ENCODE measurements at regions of chr2 and their contacts with region 1.

Region 1: DNA sequence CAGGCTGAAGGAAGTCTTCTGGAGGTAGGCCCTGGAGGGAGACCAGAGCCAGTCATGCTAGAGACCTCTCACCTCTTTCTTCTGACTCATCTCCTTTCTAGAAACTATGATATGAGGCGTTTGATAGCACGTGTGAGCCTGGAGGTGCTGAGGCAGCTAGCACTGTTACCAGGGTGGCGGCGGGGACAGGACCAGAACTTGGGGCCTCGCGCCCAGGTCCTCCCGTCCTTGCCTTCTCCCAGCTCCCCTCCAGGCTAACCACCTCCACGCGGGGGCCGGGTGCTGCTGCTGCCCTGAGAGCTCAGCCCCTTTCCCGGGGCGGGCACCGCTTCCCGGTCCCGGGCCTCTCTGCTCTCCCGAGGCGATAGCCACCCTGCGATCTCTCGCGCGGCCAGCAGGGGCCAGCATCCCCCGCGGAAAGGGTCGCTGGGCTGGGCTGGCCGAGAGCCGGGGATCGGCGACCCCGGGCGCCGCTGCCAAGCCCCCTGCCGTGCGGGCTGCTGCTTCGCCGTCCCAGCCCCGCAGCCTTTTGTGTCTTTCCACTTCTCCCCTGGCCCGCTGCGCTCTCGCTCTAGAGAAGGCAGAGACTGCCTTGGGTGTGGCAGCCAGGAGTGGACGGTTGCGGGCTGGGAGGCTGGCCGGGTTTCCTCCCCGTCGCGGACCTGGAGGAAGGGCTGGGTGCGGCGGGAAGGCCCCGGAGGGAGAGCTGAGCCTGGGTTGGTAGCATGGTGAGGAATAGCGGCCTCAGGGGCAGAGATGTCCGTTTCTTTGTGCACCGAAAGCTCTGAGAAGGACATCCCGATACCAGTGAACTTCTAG is 49.1 kb downstream of the TMEM17 start:
- DNase-seq: peak in 1 of 2 donors; percentile 81
- H3K4me3 ChIP-seq: peak overlapping the region; percentile 47 to 85
- H3K27ac ChIP-seq: peak overlapping the region in 1 of 2 donors; percentile 35
- H3K4me1 ChIP-seq: peaks cover 0 to 2% of the 10 kb centered on the region in 2 donors
- H3K27me3 ChIP-seq: no peaks in the 10 kb centered on the region
- CTCF ChIP-seq: peak; percentile 97 to 99 (median 97)

Region 2: GRCh38 chr2:62382757-62383475 is 74.0 kb before region 1 on chr2:
- intact Hi-C with region 1: no loop called
- DNase-seq: no peak
- H3K4me3 ChIP-seq: no peak overlapping the region
- H3K27ac ChIP-seq: no peak overlapping the region
- H3K4me1 ChIP-seq: no peaks in the 10 kb centered on the region
- H3K27me3 ChIP-seq: no peaks in the 10 kb centered on the region
- CTCF ChIP-seq: no peak

Region 3: GRCh38 chr2:62495761-62496160 is 38.8 kb after region 1 on chr2:
- intact Hi-C with region 1: no loop called
- DNase-seq: no peak
- H3K4me3 ChIP-seq: no peak overlapping the region
- H3K27ac ChIP-seq: no peak overlapping the region
- H3K4me1 ChIP-seq: no peaks in the 10 kb centered on the region
- H3K27me3 ChIP-seq: no peaks in the 10 kb centered on the region
- CTCF ChIP-seq: no peak

Region 4: GRCh38 chr2:62774555-62775366 is 317.8 kb after region 1 on chr2:
- intact Hi-C with region 1: loop called (anchors 1 kb)
- DNase-seq: no peak
- H3K4me3 ChIP-seq: no peak overlapping the region
- H3K27ac ChIP-seq: no peak overlapping the region
- H3K4me1 ChIP-seq: peaks cover 0 to 4% of the 10 kb centered on the region in 2 donors
- H3K27me3 ChIP-seq: no peaks in the 10 kb centered on the region
- CTCF ChIP-seq: peak; percentile 62 to 84 (median 63)

Measured in ascending aorta (tissue), 2 donors.